Transverse colon (tissue), 4 donors: ENCODE measurements at regions of chrX and their contacts with region 1.

Region 1: DNA sequence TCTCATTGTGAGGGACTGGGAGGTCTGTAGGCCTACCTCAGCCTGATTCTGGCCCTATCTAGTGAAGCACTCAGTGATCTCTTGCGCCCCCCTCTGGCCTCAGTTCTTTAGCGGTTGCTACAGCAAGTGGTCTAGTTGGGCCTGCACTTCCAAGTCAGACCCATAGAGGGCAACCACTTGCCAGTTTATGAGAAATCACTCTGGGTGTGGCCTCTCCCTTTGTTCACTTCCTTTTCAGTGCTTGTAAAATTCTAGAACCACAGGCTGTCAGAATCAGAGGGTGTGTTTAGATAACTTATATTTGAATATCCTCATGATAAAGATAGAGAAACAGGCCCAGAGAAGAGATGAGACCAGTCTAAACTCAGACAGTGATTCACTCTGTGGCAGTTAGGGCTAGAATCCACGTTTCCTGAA is 60.9 kb upstream of the LAS1L start:
- DNase-seq: peak; percentile 98
- H3K4me3 ChIP-seq: no peak overlapping the region
- H3K27ac ChIP-seq: peak overlapping the region; percentile 75 to 81 (median 77)
- H3K4me1 ChIP-seq: peaks cover 0 to 11% (median 7%) of the 10 kb centered on the region in 4 donors
- H3K27me3 ChIP-seq: no peaks in the 10 kb centered on the region
- CTCF ChIP-seq: peak; percentile 89 to 99 (median 95)
- EP300 ChIP-seq: no peak
- POLR2A ChIP-seq: no peak

Region 2: GRCh38 chrX:65658229-65658628 is 62.8 kb after region 1 on chrX:
- in situ Hi-C with region 1: no loop called
- intact Hi-C with region 1: no loop called
- DNase-seq: no peak
- H3K4me3 ChIP-seq: no peak overlapping the region
- H3K27ac ChIP-seq: no peak overlapping the region
- H3K4me1 ChIP-seq: no peaks in the 10 kb centered on the region
- H3K27me3 ChIP-seq: no peaks in the 10 kb centered on the region
- CTCF ChIP-seq: no peak
- EP300 ChIP-seq: no peak
- POLR2A ChIP-seq: no peak

Region 3: DNA sequence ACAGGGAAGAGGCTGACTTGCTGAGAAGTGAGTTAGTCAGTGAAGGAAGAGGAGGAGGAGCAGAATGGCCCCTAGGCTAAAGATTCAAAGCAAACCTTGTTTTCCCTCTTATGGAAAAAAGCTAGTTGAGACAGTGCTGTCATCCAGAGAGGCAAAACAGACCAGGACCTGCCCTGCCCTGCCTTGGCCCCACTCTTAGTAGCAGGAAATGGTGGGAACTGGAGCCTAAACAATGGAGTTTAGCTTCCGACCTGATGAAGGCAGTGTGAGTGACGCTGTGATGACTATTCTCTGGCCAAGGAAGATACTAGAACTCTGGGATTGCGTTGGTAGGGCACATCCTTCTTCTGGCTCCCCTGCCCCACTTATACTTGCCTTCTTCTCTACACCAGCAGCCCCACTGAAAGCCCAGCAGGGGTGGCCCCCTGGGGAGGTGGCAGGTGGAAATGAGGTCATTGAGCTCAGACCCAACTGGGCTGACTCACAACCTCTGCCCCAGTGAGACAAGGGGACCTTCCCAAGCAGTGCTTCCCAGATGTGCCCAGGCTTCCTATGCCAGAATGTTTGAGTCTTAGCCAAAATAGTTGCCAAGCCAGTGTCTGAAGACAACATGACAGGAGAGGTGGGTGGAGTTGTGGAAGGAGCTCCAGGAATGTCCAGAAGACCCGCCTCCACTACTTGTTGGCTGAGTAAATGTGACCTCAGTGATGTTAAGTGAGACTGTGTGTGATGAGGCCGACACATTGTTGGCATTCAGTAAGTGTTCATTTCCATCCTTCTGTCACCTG is 110.8 kb after region 1 on chrX:
- in situ Hi-C with region 1: loop called in 1 of 4 experiments (anchors 25 kb)
- intact Hi-C with region 1: loop called (anchors 10 kb)
- DNase-seq: no peak
- H3K4me3 ChIP-seq: no peak overlapping the region
- H3K27ac ChIP-seq: peak overlapping the region; percentile 50 to 78 (median 72)
- H3K4me1 ChIP-seq: peaks cover 7 to 28% (median 13%) of the 10 kb centered on the region in 4 donors
- H3K27me3 ChIP-seq: no peaks in the 10 kb centered on the region
- CTCF ChIP-seq: no peak
- EP300 ChIP-seq: no peak
- POLR2A ChIP-seq: no peak

Region 4: DNA sequence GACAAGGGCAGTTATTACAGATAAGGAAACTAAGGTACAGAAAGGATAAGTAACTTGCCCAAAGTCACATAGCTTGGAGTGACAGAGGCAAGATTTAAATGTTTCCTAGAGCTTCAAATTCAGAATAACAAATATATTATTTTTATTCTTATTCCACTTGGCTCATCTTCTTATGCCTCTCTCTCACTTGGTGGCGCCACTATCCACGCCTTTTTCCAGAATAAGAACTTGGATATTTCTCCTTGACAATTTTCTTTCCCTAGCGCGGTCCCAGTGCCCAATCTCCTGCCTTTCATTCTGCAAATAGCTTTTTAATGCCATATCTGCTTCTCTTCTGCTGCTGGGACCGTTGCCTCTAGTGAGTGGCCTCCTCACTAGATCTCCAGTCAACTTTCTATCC is 150.5 kb after region 1 on chrX:
- in situ Hi-C with region 1: loop called in 1 of 4 experiments (anchors 25 kb)
- intact Hi-C with region 1: no loop called
- DNase-seq: peak; percentile 34
- H3K4me3 ChIP-seq: no peak overlapping the region
- H3K27ac ChIP-seq: no peak overlapping the region
- H3K4me1 ChIP-seq: no peaks in the 10 kb centered on the region
- H3K27me3 ChIP-seq: no peaks in the 10 kb centered on the region
- CTCF ChIP-seq: peak; percentile 9 to 38 (median 24)
- EP300 ChIP-seq: no peak
- POLR2A ChIP-seq: no peak

Region 5: DNA sequence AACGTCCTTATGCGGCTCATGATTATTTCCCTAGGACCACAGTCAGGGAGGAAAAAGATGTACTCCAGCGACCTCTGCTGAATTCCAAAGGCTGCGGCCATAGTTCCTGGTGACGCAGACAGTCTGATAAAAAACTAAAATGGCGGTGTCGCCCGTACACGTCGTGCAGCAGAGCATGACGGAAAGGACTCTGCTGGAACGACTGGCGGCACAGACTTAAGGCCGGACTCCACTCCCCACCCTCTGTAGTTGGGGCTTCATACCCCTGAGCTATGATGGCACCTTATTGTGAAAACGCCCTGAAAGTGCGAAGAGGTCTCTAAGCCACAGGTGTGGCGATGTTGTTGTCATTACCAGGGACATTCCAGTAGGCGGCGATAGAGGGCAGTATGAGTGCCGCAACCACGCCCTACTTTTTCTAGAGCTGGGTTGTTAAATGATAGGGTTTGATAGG is 1133.4 kb after region 1 on chrX:
- in situ Hi-C with region 1: loop called in 1 of 4 experiments (anchors 25 kb)
- intact Hi-C with region 1: no loop called
- DNase-seq: peak; percentile 54
- H3K4me3 ChIP-seq: peak overlapping the region in 3 of 4 donors; percentile 29 to 56 (median 34)
- H3K27ac ChIP-seq: peak overlapping the region in 2 of 4 donors; percentile 61 to 65
- H3K4me1 ChIP-seq: no peaks in the 10 kb centered on the region
- H3K27me3 ChIP-seq: no peaks in the 10 kb centered on the region
- CTCF ChIP-seq: peak; percentile 46 to 83 (median 52)
- EP300 ChIP-seq: no peak
- POLR2A ChIP-seq: no peak